Caco-2 (cell line): ENCODE measurements at regions of chr10 and their contacts with region 1.

Region 1: DNA sequence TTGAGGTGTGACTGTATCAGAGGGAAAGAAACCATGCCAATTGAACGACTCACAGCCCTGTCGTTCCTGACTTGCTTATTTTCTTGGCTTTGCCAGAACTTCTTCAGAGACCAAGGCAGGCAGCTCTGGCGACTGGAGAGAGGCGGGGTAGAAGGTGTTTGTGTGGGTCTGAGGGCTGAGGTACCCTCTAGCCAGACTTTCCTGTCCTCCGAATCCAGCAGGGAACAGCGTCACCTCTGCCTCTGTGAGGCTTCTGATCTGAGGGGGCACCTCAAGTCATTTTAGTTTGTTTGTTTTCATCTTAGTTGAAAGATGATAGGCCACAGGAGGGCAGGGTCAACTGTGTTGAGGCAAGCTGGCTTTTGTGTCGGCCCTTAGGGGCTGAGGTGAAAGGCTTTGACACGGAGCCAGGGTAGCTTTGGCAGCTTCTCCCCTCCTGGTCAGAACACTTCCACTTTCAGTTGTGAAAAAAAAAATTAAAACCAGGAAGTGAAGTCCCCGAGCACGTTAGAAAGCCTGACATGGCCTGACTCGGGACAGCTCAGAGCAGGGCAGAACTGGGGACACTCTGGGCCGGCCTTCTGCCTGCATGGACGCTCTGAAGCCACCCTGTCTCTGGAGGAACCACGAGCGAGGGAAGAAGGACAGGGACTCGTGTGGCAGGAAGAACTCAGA is 1.9 kb downstream of the ACSL5 start:
- DNase-seq: no peak
- H3K4me3 ChIP-seq: peak overlapping the region; percentile 8; the same call in 1 of the 2 replicates
- H3K4me3 Mint-ChIP-seq: peak overlapping the region; percentile 71
- H3K27ac Mint-ChIP-seq: peak overlapping the region; percentile 88
- H3K4me1 ChIP-seq: peaks cover 70% of the 10 kb centered on the region
- H3K4me1 Mint-ChIP-seq: peaks cover 50% of the 10 kb centered on the region
- H3K27me3 ChIP-seq: no peaks in the 10 kb centered on the region
- H3K27me3 Mint-ChIP-seq: no peaks in the 10 kb centered on the region
- CTCF ChIP-seq: no peak

Region 2: GRCh38 chr10:112030431-112030830 is 345.4 kb before region 1 on chr10:
- CTCF ChIA-PET with region 1: no interaction called
- POLR2A ChIA-PET with region 1: no interaction called
- intact Hi-C with region 1: no loop called
- DNase-seq: no peak
- H3K4me3 ChIP-seq: no peak overlapping the region
- H3K4me3 Mint-ChIP-seq: no peak overlapping the region
- H3K27ac Mint-ChIP-seq: no peak overlapping the region
- H3K4me1 ChIP-seq: no peaks in the 10 kb centered on the region
- H3K4me1 Mint-ChIP-seq: no peaks in the 10 kb centered on the region
- H3K27me3 ChIP-seq: no peaks in the 10 kb centered on the region
- H3K27me3 Mint-ChIP-seq: no peaks in the 10 kb centered on the region
- CTCF ChIP-seq: no peak

Region 3: GRCh38 chr10:112295853-112296830 is 79.7 kb before region 1 on chr10:
- CTCF ChIA-PET with region 1: no interaction called
- POLR2A ChIA-PET with region 1: no interaction called
- intact Hi-C with region 1: no loop called
- DNase-seq: no peak
- H3K4me3 ChIP-seq: no peak overlapping the region
- H3K4me3 Mint-ChIP-seq: no peak overlapping the region
- H3K27ac Mint-ChIP-seq: no peak overlapping the region
- H3K4me1 ChIP-seq: peaks cover 16% of the 10 kb centered on the region; the same call in 1 of the 2 replicates
- H3K4me1 Mint-ChIP-seq: peaks cover 7% of the 10 kb centered on the region
- H3K27me3 ChIP-seq: no peaks in the 10 kb centered on the region
- H3K27me3 Mint-ChIP-seq: no peaks in the 10 kb centered on the region
- CTCF ChIP-seq: no peak

Region 4: DNA sequence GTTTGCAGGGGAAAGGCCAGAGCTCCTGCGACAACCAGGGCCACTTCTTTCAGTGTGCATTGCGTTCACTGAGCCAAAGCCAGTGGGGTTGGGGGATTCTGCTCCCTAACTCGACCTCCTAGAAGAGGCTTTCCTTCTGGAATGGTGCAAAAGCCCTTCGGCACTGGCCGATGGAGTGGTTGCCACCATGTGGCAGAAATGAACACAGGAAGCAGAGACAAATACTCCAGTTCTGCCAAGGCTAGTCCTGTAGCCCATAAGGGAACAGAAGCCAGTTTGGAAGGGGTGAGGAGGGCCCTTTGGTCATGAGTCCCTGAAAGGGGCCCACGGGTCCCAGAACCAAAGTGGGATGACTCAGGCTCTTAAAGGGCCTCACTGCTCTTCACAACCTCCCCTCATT is 31.6 kb before region 1 on chr10:
- CTCF ChIA-PET with region 1: no interaction called
- POLR2A ChIA-PET with region 1: no interaction called
- intact Hi-C with region 1: no loop called
- DNase-seq: no peak
- H3K4me3 ChIP-seq: no peak overlapping the region
- H3K4me3 Mint-ChIP-seq: no peak overlapping the region
- H3K27ac Mint-ChIP-seq: no peak overlapping the region
- H3K4me1 ChIP-seq: no peaks in the 10 kb centered on the region
- H3K4me1 Mint-ChIP-seq: no peaks in the 10 kb centered on the region
- H3K27me3 ChIP-seq: no peaks in the 10 kb centered on the region
- H3K27me3 Mint-ChIP-seq: no peaks in the 10 kb centered on the region
- CTCF ChIP-seq: no peak

Region 5: GRCh38 chr10:112361951-112362751 is 13.7 kb before region 1 on chr10:
- CTCF ChIA-PET with region 1: interaction called, 19 read pairs
- POLR2A ChIA-PET with region 1: interaction called, 12 read pairs
- intact Hi-C with region 1: no loop called
- DNase-seq: peak in 1 of 2 experiments; percentile 23
- H3K4me3 ChIP-seq: no peak overlapping the region
- H3K4me3 Mint-ChIP-seq: no peak overlapping the region
- H3K27ac Mint-ChIP-seq: no peak overlapping the region
- H3K4me1 ChIP-seq: peaks cover 63% of the 10 kb centered on the region
- H3K4me1 Mint-ChIP-seq: peaks cover 31% of the 10 kb centered on the region
- H3K27me3 ChIP-seq: no peaks in the 10 kb centered on the region
- H3K27me3 Mint-ChIP-seq: no peaks in the 10 kb centered on the region
- CTCF ChIP-seq: peak in 1 of 2 experiments; percentile 23

Region 6: GRCh38 chr10:112394475-112394875 is 18.6 kb after region 1 on chr10:
- CTCF ChIA-PET with region 1: interaction called, 6 read pairs
- POLR2A ChIA-PET with region 1: interaction called, 3 read pairs
- intact Hi-C with region 1: loop called (anchors 2 kb)
- DNase-seq: peak; percentile 70 to 82
- H3K4me3 ChIP-seq: no peak overlapping the region
- H3K4me3 Mint-ChIP-seq: no peak overlapping the region
- H3K27ac Mint-ChIP-seq: no peak overlapping the region
- H3K4me1 ChIP-seq: peaks cover 63% of the 10 kb centered on the region
- H3K4me1 Mint-ChIP-seq: peaks cover 23% of the 10 kb centered on the region
- H3K27me3 ChIP-seq: no peaks in the 10 kb centered on the region
- H3K27me3 Mint-ChIP-seq: no peaks in the 10 kb centered on the region
- CTCF ChIP-seq: no peak

Region 7: GRCh38 chr10:112409755-112410154 is 33.9 kb after region 1 on chr10:
- CTCF ChIA-PET with region 1: no interaction called
- POLR2A ChIA-PET with region 1: interaction called, 10 read pairs
- intact Hi-C with region 1: no loop called
- DNase-seq: no peak
- H3K4me3 ChIP-seq: no peak overlapping the region
- H3K4me3 Mint-ChIP-seq: no peak overlapping the region
- H3K27ac Mint-ChIP-seq: no peak overlapping the region
- H3K4me1 ChIP-seq: peaks cover 4% of the 10 kb centered on the region
- H3K4me1 Mint-ChIP-seq: peaks cover 11% of the 10 kb centered on the region
- H3K27me3 ChIP-seq: no peaks in the 10 kb centered on the region
- H3K27me3 Mint-ChIP-seq: no peaks in the 10 kb centered on the region
- CTCF ChIP-seq: no peak

Region 8: DNA sequence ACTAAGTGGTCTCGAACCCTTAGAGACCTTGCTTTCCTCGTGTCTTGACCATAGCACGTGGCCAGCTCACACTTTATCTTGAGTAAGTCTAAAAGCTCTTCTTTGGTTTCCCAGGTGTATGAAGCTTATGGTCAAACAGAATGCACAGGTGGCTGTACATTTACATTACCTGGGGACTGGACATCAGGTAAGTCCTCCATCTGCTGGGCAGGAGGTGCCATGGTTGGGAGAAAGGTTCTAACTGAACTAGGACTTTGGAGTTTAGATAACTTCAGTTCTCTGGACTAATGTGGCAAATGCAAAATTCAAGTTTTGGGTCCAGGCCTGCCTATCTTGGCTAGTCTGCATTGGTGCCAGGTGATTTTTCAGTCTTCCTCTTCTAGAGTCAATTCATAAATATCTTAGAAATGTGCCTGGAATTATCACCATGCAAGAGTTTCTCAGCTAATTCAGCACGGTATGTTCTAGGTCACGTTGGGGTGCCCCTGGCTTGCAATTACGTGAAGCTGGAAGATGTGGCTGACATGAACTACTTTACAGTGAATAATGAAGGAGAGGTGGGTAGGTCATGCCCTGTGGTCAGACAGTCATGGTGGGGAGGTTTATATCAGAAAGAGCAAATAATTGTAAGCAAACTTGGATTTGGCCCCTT is 45.7 kb after region 1 on chr10:
- CTCF ChIA-PET with region 1: interaction called, 8 read pairs
- POLR2A ChIA-PET with region 1: interaction called, 3 read pairs
- intact Hi-C with region 1: loop called (anchors 5 kb)
- DNase-seq: no peak
- H3K4me3 ChIP-seq: no peak overlapping the region
- H3K4me3 Mint-ChIP-seq: no peak overlapping the region
- H3K27ac Mint-ChIP-seq: no peak overlapping the region
- H3K4me1 ChIP-seq: no peaks in the 10 kb centered on the region
- H3K4me1 Mint-ChIP-seq: no peaks in the 10 kb centered on the region
- H3K27me3 ChIP-seq: no peaks in the 10 kb centered on the region
- H3K27me3 Mint-ChIP-seq: no peaks in the 10 kb centered on the region
- CTCF ChIP-seq: peak in 1 of 2 experiments; percentile 27